Colonic mucosa (tissue), 4 donors: ENCODE measurements at regions of chr19 and their contacts with region 1.

Region 1: DNA sequence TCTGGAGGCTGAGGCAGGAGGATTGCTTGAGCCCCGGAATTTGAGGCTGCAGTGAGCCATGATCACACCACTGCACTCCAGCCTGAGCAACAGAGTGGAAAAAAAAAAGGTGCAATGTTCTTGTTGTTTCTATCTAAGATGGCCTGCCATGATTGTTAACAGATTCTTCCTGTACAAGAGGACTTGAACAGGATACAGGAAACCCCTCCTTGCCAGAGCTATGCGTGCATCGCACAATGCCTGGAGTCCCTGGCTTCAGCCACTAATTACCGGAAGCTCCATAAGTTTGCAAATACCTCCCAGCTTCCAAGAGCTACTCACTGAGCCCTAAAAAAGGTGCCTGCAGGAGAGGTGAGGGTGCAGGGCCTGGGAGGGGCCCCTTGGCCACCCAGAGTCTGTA is 13.1 kb upstream of the HIF3A start:
- DNase-seq: no peak
- H3K4me3 ChIP-seq: no peak overlapping the region
- H3K27ac ChIP-seq: no peak overlapping the region
- H3K4me1 ChIP-seq: no peaks in the 10 kb centered on the region
- H3K27me3 ChIP-seq: no peaks in the 10 kb centered on the region
- CTCF ChIP-seq: no peak

Region 2: DNA sequence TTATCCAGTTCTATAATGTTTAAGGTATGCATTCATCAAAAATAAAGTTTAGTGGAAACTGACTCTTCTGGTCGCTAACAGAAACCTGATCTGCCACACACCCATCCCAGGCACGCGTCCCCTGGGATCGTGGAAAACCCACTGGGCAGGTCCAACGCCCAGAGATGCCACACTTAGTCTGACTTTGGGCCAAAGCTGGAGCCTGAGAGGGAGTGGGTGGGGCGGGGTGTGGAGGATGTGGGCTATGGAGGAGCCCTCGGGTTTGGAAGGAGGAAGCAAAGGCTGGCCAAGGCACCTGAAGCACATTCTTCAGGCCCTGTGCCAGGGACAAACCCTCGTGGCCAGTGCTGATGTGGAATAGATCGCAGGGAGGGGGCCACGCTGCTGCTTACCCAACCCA is 51.7 kb before region 1 on chr19:
- intact Hi-C with region 1: no loop called
- DNase-seq: no peak
- H3K4me3 ChIP-seq: no peak overlapping the region
- H3K27ac ChIP-seq: no peak overlapping the region
- H3K4me1 ChIP-seq: no peaks in the 10 kb centered on the region
- H3K27me3 ChIP-seq: no peaks in the 10 kb centered on the region
- CTCF ChIP-seq: no peak

Region 3: DNA sequence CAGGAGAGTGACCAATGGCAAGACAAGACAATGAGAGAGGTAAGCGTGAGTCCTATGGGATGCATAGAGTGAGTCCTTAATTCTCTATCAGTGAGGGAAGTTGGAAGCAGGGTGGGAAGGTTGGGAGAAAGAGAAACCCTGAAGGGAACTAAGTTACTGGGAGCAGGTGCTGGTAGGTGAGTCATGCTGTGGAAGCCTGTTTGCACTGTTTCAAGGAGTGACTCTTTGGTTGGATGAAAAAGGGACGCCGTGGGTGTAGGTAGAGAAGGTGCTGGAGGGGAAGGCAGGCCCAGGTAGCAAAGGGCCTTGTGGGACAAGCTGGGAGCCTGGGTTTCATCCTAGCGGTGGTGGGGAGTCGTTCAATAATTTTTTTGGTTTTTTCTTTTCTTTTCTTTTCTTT is 32.4 kb before region 1 on chr19:
- intact Hi-C with region 1: no loop called
- DNase-seq: no peak
- H3K4me3 ChIP-seq: no peak overlapping the region
- H3K27ac ChIP-seq: no peak overlapping the region
- H3K4me1 ChIP-seq: no peaks in the 10 kb centered on the region
- H3K27me3 ChIP-seq: no peaks in the 10 kb centered on the region
- CTCF ChIP-seq: no peak

Region 4: GRCh38 chr19:46346821-46347571 is 63.2 kb after region 1 on chr19 and contains the start of gene PPP5C:
- intact Hi-C with region 1: loop called (anchors 5 kb)
- DNase-seq: peak; percentile 91
- H3K4me3 ChIP-seq: peak within 1 kb of the TSS; percentile 99
- H3K27ac ChIP-seq: peak within 1 kb of the TSS; percentile 60
- H3K4me1 ChIP-seq: peaks cover 37% of the 10 kb centered on the region
- H3K27me3 ChIP-seq: no peaks in the 10 kb centered on the region
- CTCF ChIP-seq: peak; percentile 68
- total RNA-seq, gene PPP5C: 46.0 to 87.5 TPM

Region 5: DNA sequence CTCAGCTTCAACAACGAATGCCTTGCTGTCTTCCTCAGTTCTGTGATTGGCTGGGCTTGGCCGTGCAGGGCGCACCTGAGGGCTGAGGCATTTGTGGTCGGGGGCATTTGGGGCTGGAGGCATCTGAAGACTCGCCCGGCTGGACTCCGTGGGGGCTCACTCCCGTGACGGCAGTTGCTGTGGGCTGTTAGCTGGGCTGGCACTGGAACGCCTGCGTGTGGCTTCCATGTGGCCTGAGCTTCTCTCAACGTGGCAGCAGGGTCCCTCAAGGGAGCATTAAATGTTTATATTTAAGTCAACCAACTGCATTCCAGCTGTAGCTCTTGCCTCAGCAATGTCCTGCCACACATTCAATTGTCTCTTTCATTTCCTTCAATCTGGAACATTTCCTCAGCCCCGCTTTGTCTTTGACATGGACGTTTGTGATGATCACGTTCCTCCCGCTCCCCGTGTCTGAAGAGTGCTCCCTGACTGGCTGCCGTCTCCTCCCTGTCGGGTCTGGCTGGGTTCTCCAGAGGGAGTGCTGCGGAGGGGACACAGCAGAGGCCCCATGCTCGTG is 108.6 kb after region 1 on chr19:
- intact Hi-C with region 1: loop called (anchors 5 kb)
- DNase-seq: no peak
- H3K4me3 ChIP-seq: no peak overlapping the region
- H3K27ac ChIP-seq: no peak overlapping the region
- H3K4me1 ChIP-seq: no peaks in the 10 kb centered on the region
- H3K27me3 ChIP-seq: no peaks in the 10 kb centered on the region
- CTCF ChIP-seq: no peak

Region 6: DNA sequence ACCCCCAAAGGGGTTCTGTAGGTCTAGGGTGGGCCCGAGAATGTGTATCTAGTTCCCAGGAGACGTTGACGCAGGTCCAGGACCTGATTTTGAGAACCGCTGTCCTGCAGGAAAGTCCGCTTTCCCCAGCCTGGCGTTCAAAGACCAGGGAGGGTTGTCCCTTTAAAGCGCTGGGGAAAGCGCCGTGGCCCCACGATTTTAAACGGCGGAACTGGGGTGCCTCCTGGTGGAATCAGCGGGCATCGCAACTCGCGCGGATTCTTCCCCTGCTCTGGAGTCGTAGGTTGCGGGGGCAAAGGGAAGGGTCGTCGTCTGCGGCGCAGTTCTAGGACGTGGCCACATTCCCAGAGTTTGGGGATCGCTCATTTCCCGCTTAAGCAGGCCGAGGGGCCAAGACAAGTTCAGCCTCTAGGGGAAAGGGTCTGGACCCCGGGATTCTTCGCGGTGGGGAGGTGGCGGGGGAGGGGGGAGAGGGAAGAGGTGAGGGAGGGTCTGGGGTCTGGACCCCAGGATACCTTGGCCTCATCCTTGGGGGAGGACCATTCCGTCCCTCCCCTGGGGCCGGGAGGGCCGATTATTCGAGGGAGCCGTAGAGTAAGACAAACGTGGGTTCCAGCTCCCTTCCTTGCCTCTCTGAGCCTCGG is 204.2 kb after region 1 on chr19:
- intact Hi-C with region 1: loop called (anchors 2 kb)
- DNase-seq: peak; percentile 77
- H3K4me3 ChIP-seq: no peak overlapping the region
- H3K27ac ChIP-seq: no peak overlapping the region
- H3K4me1 ChIP-seq: peaks cover 4% of the 10 kb centered on the region
- H3K27me3 ChIP-seq: peaks cover 24% of the 10 kb centered on the region
- CTCF ChIP-seq: peak; percentile 82